Endothelial cell of umbilical vein (primary cell): ENCODE measurements at regions of chr9 and their contacts with region 1.

Region 1: DNA sequence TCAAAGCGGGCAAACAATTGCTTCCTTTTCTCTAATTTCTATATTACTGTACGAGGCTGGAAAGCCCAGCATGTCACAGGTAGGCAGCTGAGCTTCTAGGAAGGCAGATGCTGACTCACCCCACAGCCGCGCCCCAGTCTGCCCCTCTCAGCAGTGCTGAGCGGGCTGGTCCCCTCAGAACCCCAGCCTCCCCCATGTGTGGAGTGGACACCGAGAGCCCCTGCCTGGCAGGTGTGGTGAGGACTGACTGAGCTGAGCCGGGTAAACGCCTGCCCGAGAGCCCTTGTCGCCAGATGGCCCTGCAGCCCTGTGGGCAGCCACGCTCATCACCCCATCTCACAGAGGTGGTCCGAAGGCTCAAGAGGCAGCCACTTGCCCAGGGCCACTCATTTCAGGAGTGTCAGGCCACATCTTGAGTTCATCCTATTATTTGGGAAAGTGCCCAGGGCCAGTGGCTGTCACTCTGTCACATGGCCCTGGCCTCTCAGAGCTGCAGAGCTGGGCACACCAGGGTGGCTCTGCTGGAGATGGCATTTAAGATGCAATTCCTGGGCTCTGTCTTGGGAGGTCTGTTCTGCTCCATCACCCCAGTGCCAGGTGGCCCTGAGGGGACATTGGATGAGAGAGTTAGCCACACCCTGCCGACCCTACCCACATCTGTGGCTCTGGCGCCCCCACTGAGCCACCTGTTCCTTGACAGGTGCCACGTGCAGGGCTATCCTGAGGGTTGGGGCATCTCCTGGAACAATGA is 12.4 kb downstream of the CARD19 start:
- DNase-seq: no peak
- H3K4me3 ChIP-seq: no peak overlapping the region
- H3K27ac ChIP-seq: no peak overlapping the region
- H3K4me1 ChIP-seq: no peaks in the 10 kb centered on the region
- H3K27me3 ChIP-seq: no peaks in the 10 kb centered on the region
- CTCF ChIP-seq: no peak
- POLR2A ChIP-seq: no peak

Region 2: GRCh38 chr9:92564504-92564903 is 544.0 kb before region 1 on chr9:
- CTCF ChIA-PET with region 1: no interaction called
- POLR2A ChIA-PET with region 1: no interaction called
- dilution Hi-C with region 1: no loop called
- intact Hi-C with region 1: no loop called
- DNase-seq: peak; percentile 10
- H3K4me3 ChIP-seq: no peak overlapping the region
- H3K27ac ChIP-seq: no peak overlapping the region
- H3K4me1 ChIP-seq: no peaks in the 10 kb centered on the region
- H3K27me3 ChIP-seq: no peaks in the 10 kb centered on the region
- CTCF ChIP-seq: no peak
- POLR2A ChIP-seq: no peak

Region 3: DNA sequence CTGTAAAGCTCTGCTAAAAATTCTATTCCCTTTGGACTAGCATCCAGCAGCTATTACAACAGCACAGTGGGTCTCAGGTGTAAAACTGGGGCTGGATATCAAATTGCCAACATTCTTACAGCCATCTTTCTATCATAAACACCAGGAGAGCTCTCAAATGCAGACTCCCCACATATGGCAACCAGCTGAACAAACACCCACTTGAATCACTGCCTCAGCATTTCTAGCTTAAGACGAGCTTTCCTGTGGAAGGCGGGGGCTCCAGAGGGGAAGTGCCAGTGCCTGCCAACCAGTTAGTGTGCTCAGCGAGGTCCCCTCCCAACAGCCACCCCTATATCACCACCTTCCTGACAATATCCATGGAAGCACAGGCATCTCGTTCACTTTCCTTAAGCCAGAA is 500.7 kb before region 1 on chr9:
- CTCF ChIA-PET with region 1: no interaction called
- POLR2A ChIA-PET with region 1: no interaction called
- dilution Hi-C with region 1: no loop called
- intact Hi-C with region 1: no loop called
- DNase-seq: peak; percentile 62
- H3K4me3 ChIP-seq: no peak overlapping the region
- H3K27ac ChIP-seq: no peak overlapping the region
- H3K4me1 ChIP-seq: no peaks in the 10 kb centered on the region
- H3K27me3 ChIP-seq: no peaks in the 10 kb centered on the region
- CTCF ChIP-seq: no peak
- POLR2A ChIP-seq: no peak

Region 4: GRCh38 chr9:92934321-92934720 is 174.1 kb before region 1 on chr9:
- CTCF ChIA-PET with region 1: no interaction called
- POLR2A ChIA-PET with region 1: no interaction called
- dilution Hi-C with region 1: no loop called
- intact Hi-C with region 1: no loop called
- DNase-seq: no peak
- H3K4me3 ChIP-seq: no peak overlapping the region
- H3K27ac ChIP-seq: no peak overlapping the region
- H3K4me1 ChIP-seq: no peaks in the 10 kb centered on the region
- H3K27me3 ChIP-seq: no peaks in the 10 kb centered on the region
- CTCF ChIP-seq: no peak
- POLR2A ChIP-seq: no peak

Region 5: DNA sequence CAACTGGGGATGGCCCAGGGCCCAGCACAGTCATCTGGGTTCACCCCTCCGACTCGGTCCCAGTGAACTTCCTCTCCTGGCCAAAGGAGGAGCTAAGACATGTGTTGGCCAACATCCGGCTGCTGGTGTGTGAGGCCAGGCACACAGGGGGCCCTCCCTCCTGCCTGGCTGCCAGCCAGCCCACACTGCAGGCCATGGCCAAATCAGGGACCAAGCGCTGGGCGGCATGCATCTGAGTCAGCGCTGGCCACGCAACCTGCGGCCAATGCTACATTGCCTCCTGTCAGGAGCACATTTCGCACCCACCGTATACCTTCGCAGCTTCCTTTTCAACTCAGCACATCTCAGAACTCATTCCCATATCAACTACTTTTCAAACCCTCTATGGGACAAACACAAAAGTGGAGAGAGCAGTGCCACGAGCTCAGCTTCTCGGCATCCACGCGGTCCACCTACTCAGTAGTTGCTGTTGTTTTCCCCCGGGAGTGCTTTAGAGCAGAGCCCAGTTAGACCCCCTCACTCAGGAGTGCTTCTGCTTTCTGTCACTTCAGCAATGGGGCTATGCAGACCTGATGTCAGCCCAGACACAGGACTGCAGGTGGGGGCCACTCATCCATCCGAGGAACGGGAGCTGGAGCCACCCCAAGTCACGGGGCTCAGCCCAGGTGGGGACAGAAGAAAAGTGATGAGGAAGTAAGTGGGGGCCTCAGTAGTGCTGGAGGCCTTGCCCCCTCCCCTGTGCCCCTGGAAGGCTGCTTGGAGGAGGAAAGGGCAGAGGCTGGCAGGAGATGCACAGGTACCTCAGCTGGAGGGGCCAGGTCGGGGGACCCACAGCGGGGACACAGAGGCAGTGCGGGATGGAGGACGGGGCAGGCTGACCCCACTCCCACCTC is 11.7 kb after region 1 on chr9:
- CTCF ChIA-PET with region 1: interaction called, 70 read pairs
- POLR2A ChIA-PET with region 1: no interaction called
- dilution Hi-C with region 1: no loop called
- intact Hi-C with region 1: no loop called
- DNase-seq: peak; percentile 80
- H3K4me3 ChIP-seq: no peak overlapping the region
- H3K27ac ChIP-seq: no peak overlapping the region
- H3K4me1 ChIP-seq: peaks cover 10% of the 10 kb centered on the region
- H3K27me3 ChIP-seq: no peaks in the 10 kb centered on the region
- CTCF ChIP-seq: peak in 1 of 2 donors; percentile 41
- POLR2A ChIP-seq: peak; percentile 30

Region 6: GRCh38 chr9:93126825-93127368 is 18.4 kb after region 1 on chr9:
- CTCF ChIA-PET with region 1: interaction called, 52 read pairs
- POLR2A ChIA-PET with region 1: no interaction called
- dilution Hi-C with region 1: no loop called
- intact Hi-C with region 1: no loop called
- DNase-seq: peak; percentile 50
- H3K4me3 ChIP-seq: no peak overlapping the region
- H3K27ac ChIP-seq: peak overlapping the region; percentile 31
- H3K4me1 ChIP-seq: peaks cover 50% of the 10 kb centered on the region
- H3K27me3 ChIP-seq: no peaks in the 10 kb centered on the region
- CTCF ChIP-seq: no peak
- POLR2A ChIP-seq: no peak

Region 7: DNA sequence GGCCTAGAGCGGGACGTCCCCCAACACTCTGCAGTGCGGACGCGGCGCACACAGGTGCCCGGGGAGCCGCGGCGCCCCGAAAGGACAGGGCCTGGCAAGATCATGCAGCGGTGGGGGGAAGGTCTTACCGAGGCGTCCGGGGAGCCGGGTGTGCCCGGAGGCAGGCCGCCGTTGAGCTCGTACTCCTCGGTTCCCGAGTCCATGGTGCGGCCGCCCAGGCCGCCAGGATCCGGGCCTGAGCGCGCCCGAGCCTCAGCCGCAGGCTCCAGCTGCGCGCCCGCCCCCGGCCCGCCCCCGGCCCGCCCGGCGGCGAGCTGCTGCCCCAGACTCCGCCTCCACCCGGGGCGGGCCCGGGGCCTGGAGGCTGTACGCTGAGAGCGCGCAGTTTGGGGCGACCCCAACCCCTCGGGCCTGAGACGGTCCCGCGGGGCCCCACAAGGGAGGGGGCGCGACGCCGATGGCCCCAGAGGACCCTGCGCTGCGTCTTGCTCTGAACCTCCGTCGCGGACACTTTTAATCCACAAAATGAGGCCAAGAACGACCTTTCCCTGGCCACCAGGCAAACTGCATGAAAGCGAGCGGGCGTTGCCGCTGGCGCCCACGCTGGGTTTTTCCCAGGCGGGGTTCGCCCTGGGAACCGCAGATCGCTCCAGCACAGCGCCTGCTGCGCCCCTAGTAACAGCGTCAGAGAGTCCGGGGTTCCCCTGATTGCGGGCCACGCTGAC is 25.7 kb after region 1 on chr9 and contains the start of gene NINJ1:
- CTCF ChIA-PET with region 1: interaction called, 52 read pairs
- POLR2A ChIA-PET with region 1: no interaction called
- dilution Hi-C with region 1: no loop called
- intact Hi-C with region 1: no loop called
- DNase-seq: peak; percentile 83
- H3K4me3 ChIP-seq: peak within 1 kb of the TSS; percentile 54 to 63 (median 58)
- H3K27ac ChIP-seq: peak within 1 kb of the TSS; percentile 75
- H3K4me1 ChIP-seq: peaks cover 49% of the 10 kb centered on the region
- H3K27me3 ChIP-seq: no peaks in the 10 kb centered on the region
- CTCF ChIP-seq: peak in 1 of 2 donors; percentile 5
- POLR2A ChIP-seq: peak; percentile 77
- total RNA-seq, gene NINJ1: 31.5 and 42.2 TPM in 2 replicates

Region 8: GRCh38 chr9:93159601-93160471 is 51.4 kb after region 1 on chr9:
- CTCF ChIA-PET with region 1: interaction called, 7 read pairs
- POLR2A ChIA-PET with region 1: no interaction called
- dilution Hi-C with region 1: no loop called
- intact Hi-C with region 1: loop called (anchors 1 kb)
- DNase-seq: peak; percentile 66
- H3K4me3 ChIP-seq: no peak overlapping the region
- H3K27ac ChIP-seq: no peak overlapping the region
- H3K4me1 ChIP-seq: no peaks in the 10 kb centered on the region
- H3K27me3 ChIP-seq: no peaks in the 10 kb centered on the region
- CTCF ChIP-seq: peak; percentile 98
- POLR2A ChIP-seq: no peak

Region 9: DNA sequence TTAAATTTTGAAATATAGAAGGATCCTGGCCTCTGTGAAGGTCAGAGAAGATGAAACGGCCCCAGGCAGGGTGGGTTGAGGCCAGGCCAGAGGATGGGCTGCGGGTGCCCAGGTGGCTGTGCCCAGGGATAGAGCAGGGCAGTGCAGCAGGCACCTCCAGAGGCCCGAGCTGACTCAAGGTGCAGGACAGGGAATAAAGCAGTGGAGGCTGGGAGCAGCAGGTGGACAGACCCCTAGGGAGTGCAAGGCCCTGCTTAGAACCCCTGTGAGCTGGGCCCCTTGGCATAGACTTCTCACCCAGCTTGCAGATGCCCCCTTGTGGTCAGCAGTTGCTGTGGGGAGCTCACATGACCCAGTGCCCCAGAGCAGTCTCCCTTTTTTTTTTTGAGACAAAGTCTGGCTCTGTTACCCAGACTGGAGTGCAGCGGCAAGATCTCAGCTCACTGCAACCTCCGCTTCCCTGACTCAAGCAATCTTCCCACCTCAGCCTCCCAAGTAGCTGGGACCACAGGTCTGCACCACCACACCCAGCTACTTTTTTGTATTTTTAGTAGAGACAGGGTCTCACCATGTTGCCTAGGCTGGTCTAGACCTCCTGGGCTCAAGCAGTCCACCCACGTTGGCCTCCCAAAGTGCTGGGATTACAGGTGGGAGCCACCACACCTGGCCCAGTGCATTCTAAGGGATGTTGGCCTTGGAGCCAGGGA is 194.2 kb after region 1 on chr9:
- CTCF ChIA-PET with region 1: interaction called, 49 read pairs
- POLR2A ChIA-PET with region 1: no interaction called
- dilution Hi-C with region 1: no loop called
- intact Hi-C with region 1: loop called (anchors 1 kb)
- DNase-seq: peak; percentile 44
- H3K4me3 ChIP-seq: no peak overlapping the region
- H3K27ac ChIP-seq: no peak overlapping the region
- H3K4me1 ChIP-seq: no peaks in the 10 kb centered on the region
- H3K27me3 ChIP-seq: no peaks in the 10 kb centered on the region
- CTCF ChIP-seq: peak; percentile 53 to 82
- POLR2A ChIP-seq: no peak